ENCODE measurements at regions of chr9 and their contacts with region 1.

Region 1: GRCh38 chr9:109903515-109904138 is 123.6 kb downstream of the PALM2AKAP2 start:
- DNase-seq: peak in 8 of 9 experiments; percentile 11 to 72 (median 47)
- ATAC-seq: no peak
- H3K4me3 ChIP-seq: no peak overlapping the region
- H3K4me3 Mint-ChIP-seq: no peak overlapping the region
- H3K27ac ChIP-seq: no peak overlapping the region
- H3K27ac Mint-ChIP-seq: no peak overlapping the region
- H3K4me1 ChIP-seq: no peaks in the 10 kb centered on the region
- H3K4me1 Mint-ChIP-seq: no peaks in the 10 kb centered on the region
- H3K27me3 ChIP-seq: no peaks in the 10 kb centered on the region
- H3K27me3 Mint-ChIP-seq: no peaks in the 10 kb centered on the region
- CTCF ChIP-seq: peak; percentile 74

Region 2: GRCh38 chr9:109831998-109832658 is 71.5 kb before region 1 on chr9:
- CTCF ChIA-PET with region 1: no interaction called
- POLR2A ChIA-PET with region 1: no interaction called
- intact Hi-C with region 1: no loop called
- DNase-seq: no peak
- ATAC-seq: no peak
- H3K4me3 ChIP-seq: no peak overlapping the region
- H3K4me3 Mint-ChIP-seq: no peak overlapping the region
- H3K27ac ChIP-seq: no peak overlapping the region
- H3K27ac Mint-ChIP-seq: no peak overlapping the region
- H3K4me1 ChIP-seq: no peaks in the 10 kb centered on the region
- H3K4me1 Mint-ChIP-seq: no peaks in the 10 kb centered on the region
- H3K27me3 ChIP-seq: no peaks in the 10 kb centered on the region
- H3K27me3 Mint-ChIP-seq: peaks cover 7% of the 10 kb centered on the region
- CTCF ChIP-seq: no peak

Region 3: GRCh38 chr9:109875495-109876129 is 28.0 kb before region 1 on chr9:
- CTCF ChIA-PET with region 1: no interaction called
- POLR2A ChIA-PET with region 1: no interaction called
- intact Hi-C with region 1: no loop called
- DNase-seq: no peak
- ATAC-seq: no peak
- H3K4me3 ChIP-seq: no peak overlapping the region
- H3K4me3 Mint-ChIP-seq: no peak overlapping the region
- H3K27ac ChIP-seq: no peak overlapping the region
- H3K27ac Mint-ChIP-seq: no peak overlapping the region
- H3K4me1 ChIP-seq: no peaks in the 10 kb centered on the region
- H3K4me1 Mint-ChIP-seq: no peaks in the 10 kb centered on the region
- H3K27me3 ChIP-seq: no peaks in the 10 kb centered on the region
- H3K27me3 Mint-ChIP-seq: peaks cover 9% of the 10 kb centered on the region
- CTCF ChIP-seq: no peak

Region 4: GRCh38 chr9:110058304-110058953 is 154.8 kb after region 1 on chr9:
- CTCF ChIA-PET with region 1: interaction called, 140 read pairs
- POLR2A ChIA-PET with region 1: no interaction called
- intact Hi-C with region 1: loop called in 1 of 2 experiments (anchors 1 kb)
- DNase-seq: peak in 6 of 9 experiments; percentile 14 to 59 (median 42)
- ATAC-seq: no peak
- H3K4me3 ChIP-seq: no peak overlapping the region
- H3K4me3 Mint-ChIP-seq: no peak overlapping the region
- H3K27ac ChIP-seq: no peak overlapping the region
- H3K27ac Mint-ChIP-seq: no peak overlapping the region
- H3K4me1 ChIP-seq: no peaks in the 10 kb centered on the region
- H3K4me1 Mint-ChIP-seq: no peaks in the 10 kb centered on the region
- H3K27me3 ChIP-seq: no peaks in the 10 kb centered on the region
- H3K27me3 Mint-ChIP-seq: peaks cover 4% of the 10 kb centered on the region
- CTCF ChIP-seq: peak; percentile 37

Region 5: GRCh38 chr9:110217656-110218099 is 314.1 kb after region 1 on chr9:
- CTCF ChIA-PET with region 1: interaction called, 12 read pairs
- POLR2A ChIA-PET with region 1: no interaction called
- intact Hi-C with region 1: loop called (anchors 1 kb)
- DNase-seq: peak in 2 of 9 experiments; percentile 30 to 47
- ATAC-seq: no peak
- H3K4me3 ChIP-seq: no peak overlapping the region
- H3K4me3 Mint-ChIP-seq: no peak overlapping the region
- H3K27ac ChIP-seq: no peak overlapping the region
- H3K27ac Mint-ChIP-seq: no peak overlapping the region
- H3K4me1 ChIP-seq: no peaks in the 10 kb centered on the region
- H3K4me1 Mint-ChIP-seq: no peaks in the 10 kb centered on the region
- H3K27me3 ChIP-seq: no peaks in the 10 kb centered on the region
- H3K27me3 Mint-ChIP-seq: peaks cover 6% of the 10 kb centered on the region
- CTCF ChIP-seq: peak; percentile 84

Measured in CD8-positive, alpha-beta T cell (primary cell).